ENCODE measurements at regions of chr12 and their contacts with region 1.

Region 1: GRCh38 chr12:25151476-25151875 is 43.5 kb downstream of the DNAI7 start:
- DNase-seq: no peak
- ATAC-seq: no peak
- H3K4me3 Mint-ChIP-seq: no peak overlapping the region
- H3K27ac Mint-ChIP-seq: no peak overlapping the region
- H3K4me1 Mint-ChIP-seq: peaks cover 22% of the 10 kb centered on the region
- H3K27me3 Mint-ChIP-seq: no peaks in the 10 kb centered on the region
- CTCF ChIP-seq: no peak

Region 2: GRCh38 chr12:23585782-23586163 is 1565.7 kb before region 1 on chr12:
- CTCF ChIA-PET with region 1: no interaction called
- POLR2A ChIA-PET with region 1: no interaction called
- intact Hi-C with region 1: no loop called
- DNase-seq: no peak
- ATAC-seq: no peak
- H3K4me3 Mint-ChIP-seq: no peak overlapping the region
- H3K27ac Mint-ChIP-seq: no peak overlapping the region
- H3K4me1 Mint-ChIP-seq: peaks cover 3% of the 10 kb centered on the region
- H3K27me3 Mint-ChIP-seq: no peaks in the 10 kb centered on the region
- CTCF ChIP-seq: no peak

Region 3: DNA sequence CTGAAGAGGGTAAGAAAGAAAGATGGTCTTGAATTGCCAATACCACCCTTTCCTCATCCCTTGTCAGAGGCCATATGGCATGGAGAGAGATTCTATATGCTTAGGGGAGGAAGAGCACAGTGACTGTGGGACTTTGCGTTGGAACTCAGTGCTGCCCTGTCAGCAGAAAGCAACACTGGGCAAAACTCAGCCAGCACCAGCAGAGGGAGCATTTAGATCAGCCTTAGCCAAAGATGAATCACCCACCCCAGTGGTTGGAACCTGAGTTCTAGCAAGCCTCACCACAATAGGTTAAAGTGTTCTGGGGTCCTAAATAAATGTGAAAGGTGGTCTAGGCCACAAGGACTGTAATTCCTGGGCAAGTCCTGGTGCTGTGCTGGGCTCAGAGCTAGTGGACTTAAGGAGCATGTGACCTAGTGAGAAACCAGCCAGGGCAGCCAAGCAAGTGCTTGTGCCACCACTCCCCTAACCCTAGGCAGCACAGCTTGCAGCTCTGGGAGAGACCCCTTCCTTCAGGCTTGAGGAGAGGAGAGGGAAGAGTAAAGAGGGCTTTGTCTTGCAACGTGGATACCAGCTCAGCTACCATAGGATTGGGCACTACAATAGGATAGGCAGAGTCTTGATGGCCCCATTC is 191.1 kb before region 1 on chr12:
- CTCF ChIA-PET with region 1: interaction called, 4 read pairs
- POLR2A ChIA-PET with region 1: no interaction called
- intact Hi-C with region 1: loop called (anchors 1 kb)
- DNase-seq: no peak
- ATAC-seq: peak; percentile 79
- H3K4me3 Mint-ChIP-seq: no peak overlapping the region
- H3K27ac Mint-ChIP-seq: no peak overlapping the region
- H3K4me1 Mint-ChIP-seq: peaks cover 14% of the 10 kb centered on the region
- H3K27me3 Mint-ChIP-seq: no peaks in the 10 kb centered on the region
- CTCF ChIP-seq: no peak

Region 4: DNA sequence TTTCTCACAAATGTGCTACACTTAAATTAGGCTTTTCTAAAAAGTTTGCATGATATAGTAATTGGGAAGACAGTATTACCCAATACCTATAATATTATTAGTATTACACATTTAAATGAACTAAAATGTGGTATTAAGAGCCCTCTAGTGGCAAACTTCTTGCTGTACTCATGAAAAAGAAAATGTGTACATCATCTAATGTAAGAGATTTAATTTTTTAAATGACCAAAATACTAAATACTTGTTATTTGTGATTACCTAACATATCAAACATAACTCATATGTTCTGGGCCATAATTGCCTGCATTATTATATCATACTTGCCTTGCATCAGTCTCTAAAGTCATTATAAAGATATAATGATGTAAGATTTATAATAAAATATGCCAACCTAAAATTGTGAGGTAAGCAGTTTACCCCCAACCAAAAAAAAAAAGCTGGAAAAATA is 20.7 kb before region 1 on chr12:
- CTCF ChIA-PET with region 1: interaction called, 14 read pairs
- POLR2A ChIA-PET with region 1: no interaction called
- intact Hi-C with region 1: loop called (anchors 2 kb)
- DNase-seq: no peak
- ATAC-seq: peak; percentile 54
- H3K4me3 Mint-ChIP-seq: no peak overlapping the region
- H3K27ac Mint-ChIP-seq: no peak overlapping the region
- H3K4me1 Mint-ChIP-seq: peaks cover 7% of the 10 kb centered on the region
- H3K27me3 Mint-ChIP-seq: no peaks in the 10 kb centered on the region
- CTCF ChIP-seq: no peak

Region 5: DNA sequence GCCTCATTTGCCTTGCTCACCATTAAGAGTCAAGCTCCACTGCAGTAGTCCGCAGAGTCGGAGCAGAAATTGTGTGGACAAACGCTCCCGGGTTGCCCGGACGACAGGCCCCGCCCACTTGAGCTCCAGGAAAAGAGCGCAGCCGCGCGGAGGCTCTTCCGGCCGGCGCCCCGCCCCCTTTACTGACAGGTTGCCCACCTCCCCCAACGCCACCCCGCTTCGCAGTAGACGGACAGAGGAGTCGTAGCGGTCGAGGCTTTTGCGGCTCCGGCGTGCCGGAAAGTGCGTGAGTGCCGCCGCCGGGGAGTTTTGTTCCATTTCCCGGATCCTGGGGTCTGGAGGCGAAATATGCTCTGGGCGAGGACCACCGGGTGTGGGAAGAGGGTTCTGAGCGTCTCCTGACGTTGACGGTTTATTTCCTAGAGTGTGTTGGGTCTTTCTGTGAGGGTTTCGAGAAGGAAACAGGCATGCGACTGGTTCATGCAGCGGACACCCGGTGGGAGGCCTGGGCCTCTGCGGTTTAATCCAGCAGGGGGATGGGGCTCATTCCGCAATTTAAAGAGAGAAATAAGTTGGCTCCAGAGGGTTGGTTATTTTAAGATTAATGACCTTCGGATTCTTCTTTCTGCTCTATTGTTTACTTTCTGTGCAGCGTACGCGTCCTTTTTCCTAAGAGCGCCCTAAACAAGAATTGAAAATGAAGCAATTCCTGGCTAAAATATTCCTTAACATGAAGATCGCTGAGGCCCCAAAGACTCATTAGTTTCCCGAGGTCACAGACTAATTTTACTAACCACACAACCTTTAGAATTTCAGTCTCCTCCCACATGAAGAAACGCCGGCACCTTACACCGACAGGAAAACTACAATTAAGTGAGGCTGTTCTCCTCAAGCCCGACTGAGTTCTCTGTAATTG is 43.8 kb after region 1 on chr12 and contains the starts of genes DNAI7 and ETFRF1:
- CTCF ChIA-PET with region 1: interaction called, 11 read pairs
- POLR2A ChIA-PET with region 1: interaction called, 20 read pairs
- intact Hi-C with region 1: no loop called
- DNase-seq: peak; percentile 98
- ATAC-seq: peak; percentile 97
- H3K4me3 Mint-ChIP-seq: peak within 1 kb of the TSS; percentile 94
- H3K27ac Mint-ChIP-seq: peak within 1 kb of the TSS; percentile 96
- H3K4me1 Mint-ChIP-seq: peaks cover 34% of the 10 kb centered on the region
- H3K27me3 Mint-ChIP-seq: no peaks in the 10 kb centered on the region
- CTCF ChIP-seq: no peak
- total RNA-seq, gene DNAI7: 0.15 and 0.27 TPM in 2 replicates
- total RNA-seq, gene ETFRF1: 15.4 and 17.6 TPM in 2 replicates

Region 6: DNA sequence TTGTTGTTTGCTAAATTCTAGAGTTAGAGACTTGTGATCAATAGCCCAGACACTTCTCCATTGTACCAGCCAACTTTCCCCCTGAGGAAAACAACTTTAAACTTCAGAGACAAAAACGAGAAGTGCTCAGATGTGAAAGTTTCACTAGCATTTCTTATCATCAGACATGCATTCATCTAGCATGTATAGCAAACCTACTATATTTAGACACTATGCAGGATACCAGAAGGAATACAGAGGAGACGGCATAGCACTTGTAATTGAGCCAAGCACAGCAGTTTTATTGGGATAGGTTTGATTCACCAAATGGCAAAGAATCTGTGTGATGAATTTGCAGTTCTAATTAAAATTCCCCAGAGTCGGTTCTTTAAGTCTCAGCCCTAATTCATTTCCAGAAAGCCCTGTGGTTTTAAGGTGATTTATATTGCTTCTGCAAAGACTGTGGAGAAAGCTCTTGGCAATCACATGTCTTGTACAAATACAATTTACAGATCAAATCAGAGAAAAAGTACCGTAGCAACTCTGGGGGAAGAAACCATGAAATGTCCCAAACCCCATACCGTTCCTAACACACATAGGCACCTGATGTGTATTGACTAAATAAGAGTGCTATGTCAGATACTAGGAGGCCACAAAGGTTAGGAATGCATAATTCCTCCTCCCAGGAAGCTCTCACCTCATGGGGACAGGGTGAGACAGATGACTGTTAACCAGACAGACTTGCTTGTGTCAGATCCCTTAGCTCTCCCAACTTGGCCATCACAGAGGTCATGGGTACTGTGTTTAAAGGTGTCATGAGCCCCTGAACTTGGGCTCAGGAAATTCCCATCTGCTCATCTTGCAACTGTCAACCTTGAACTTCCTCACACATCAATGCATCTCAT is 168.9 kb after region 1 on chr12:
- CTCF ChIA-PET with region 1: no interaction called
- POLR2A ChIA-PET with region 1: no interaction called
- intact Hi-C with region 1: loop called (anchors 5 kb)
- DNase-seq: no peak
- ATAC-seq: peak; percentile 71
- H3K4me3 Mint-ChIP-seq: peak overlapping the region; percentile 52
- H3K27ac Mint-ChIP-seq: peak overlapping the region; percentile 83
- H3K4me1 Mint-ChIP-seq: peaks cover 73% of the 10 kb centered on the region
- H3K27me3 Mint-ChIP-seq: no peaks in the 10 kb centered on the region
- CTCF ChIP-seq: no peak

Region 7: GRCh38 chr12:26803552-26803951 is 1652.1 kb after region 1 on chr12:
- CTCF ChIA-PET with region 1: no interaction called
- POLR2A ChIA-PET with region 1: no interaction called
- intact Hi-C with region 1: no loop called
- DNase-seq: no peak
- ATAC-seq: no peak
- H3K4me3 Mint-ChIP-seq: no peak overlapping the region
- H3K27ac Mint-ChIP-seq: no peak overlapping the region
- H3K4me1 Mint-ChIP-seq: peaks cover 24% of the 10 kb centered on the region
- H3K27me3 Mint-ChIP-seq: no peaks in the 10 kb centered on the region
- CTCF ChIP-seq: no peak

Measured in activated B cell treated with CpG ODN at 0.5 μM for 24 hours (primary cell).